ENCODE measurements at regions of chr1 and their contacts with region 1.

Region 1: GRCh38 chr1:196660852-196661251 is 9.0 kb downstream of the CFH start:
- DNase-seq: peak; percentile 47 to 49 (median 48)
- ATAC-seq: peak; percentile 82
- H3K4me3 ChIP-seq: no peak overlapping the region
- H3K27ac ChIP-seq: no peak overlapping the region
- H3K4me1 ChIP-seq: no peaks in the 10 kb centered on the region
- H3K27me3 ChIP-seq: no peaks in the 10 kb centered on the region
- CTCF ChIP-seq: peak in 2 of 3 experiments; percentile 52 to 69; a peak in 3 of 6 replicates
- EP300 ChIP-seq: no peak
- POLR2A ChIP-seq: no peak
- RAD21 ChIP-seq: peak; percentile 92 to 93

Region 2: DNA sequence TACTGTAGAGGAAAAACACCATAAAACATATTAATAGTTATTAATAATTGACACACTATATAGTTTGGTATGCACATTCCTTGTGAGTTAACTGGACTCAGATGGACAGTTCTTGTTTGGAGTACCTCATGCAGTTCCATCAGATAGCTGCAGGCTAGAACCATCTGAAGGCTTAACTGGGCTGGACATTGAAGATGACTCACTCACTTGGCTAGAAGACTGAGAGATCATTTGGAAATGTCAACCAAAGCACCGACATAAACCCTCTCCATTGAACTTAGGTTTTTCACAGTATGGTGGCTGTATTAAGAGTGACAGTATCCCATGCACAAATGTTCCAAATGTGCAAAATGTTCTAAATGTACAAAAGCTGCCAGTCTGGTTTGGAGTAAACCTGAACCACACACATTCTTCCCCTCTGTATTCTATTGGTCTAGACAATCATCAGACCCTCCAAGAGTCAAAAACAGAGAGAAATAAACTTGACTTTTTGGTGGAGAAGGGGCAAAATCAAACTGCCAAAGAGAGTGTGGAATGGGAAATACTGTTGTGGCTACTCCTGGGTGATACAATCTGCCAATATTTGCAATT is 761.0 kb before region 1 on chr1:
- CTCF ChIA-PET with region 1: no interaction called
- POLR2A ChIA-PET with region 1: no interaction called
- in situ Hi-C with region 1: loop called (anchors 25 kb)
- intact Hi-C with region 1: loop called (anchors 2 kb)
- DNase-seq: peak; percentile 49 to 90 (median 62)
- ATAC-seq: peak; percentile 90
- H3K4me3 ChIP-seq: no peak overlapping the region
- H3K27ac ChIP-seq: peak overlapping the region; percentile 65
- H3K4me1 ChIP-seq: peaks cover 0 to 30% of the 10 kb centered on the region in 2 experiments; a peak in 2 of 5 replicates
- H3K27me3 ChIP-seq: no peaks in the 10 kb centered on the region
- CTCF ChIP-seq: no peak
- EP300 ChIP-seq: peak; percentile 80
- POLR2A ChIP-seq: no peak
- RAD21 ChIP-seq: no peak; a peak in 1 of 4 replicates

Region 3: GRCh38 chr1:196317535-196318522 is 343.0 kb before region 1 on chr1:
- CTCF ChIA-PET with region 1: interaction called, 12 read pairs
- POLR2A ChIA-PET with region 1: no interaction called
- in situ Hi-C with region 1: loop called (anchors 10 kb)
- intact Hi-C with region 1: loop called (anchors 1 kb)
- DNase-seq: peak in 3 of 4 experiments; percentile 10 to 47 (median 13)
- ATAC-seq: peak; percentile 64; the same call in 2 of the 3 replicates
- H3K4me3 ChIP-seq: no peak overlapping the region
- H3K27ac ChIP-seq: no peak overlapping the region
- H3K4me1 ChIP-seq: no peaks in the 10 kb centered on the region
- H3K27me3 ChIP-seq: no peaks in the 10 kb centered on the region
- CTCF ChIP-seq: peak; percentile 41 to 54 (median 46); a peak in 4 of 6 replicates
- EP300 ChIP-seq: no peak
- POLR2A ChIP-seq: no peak
- RAD21 ChIP-seq: peak; percentile 70 to 78

Region 4: DNA sequence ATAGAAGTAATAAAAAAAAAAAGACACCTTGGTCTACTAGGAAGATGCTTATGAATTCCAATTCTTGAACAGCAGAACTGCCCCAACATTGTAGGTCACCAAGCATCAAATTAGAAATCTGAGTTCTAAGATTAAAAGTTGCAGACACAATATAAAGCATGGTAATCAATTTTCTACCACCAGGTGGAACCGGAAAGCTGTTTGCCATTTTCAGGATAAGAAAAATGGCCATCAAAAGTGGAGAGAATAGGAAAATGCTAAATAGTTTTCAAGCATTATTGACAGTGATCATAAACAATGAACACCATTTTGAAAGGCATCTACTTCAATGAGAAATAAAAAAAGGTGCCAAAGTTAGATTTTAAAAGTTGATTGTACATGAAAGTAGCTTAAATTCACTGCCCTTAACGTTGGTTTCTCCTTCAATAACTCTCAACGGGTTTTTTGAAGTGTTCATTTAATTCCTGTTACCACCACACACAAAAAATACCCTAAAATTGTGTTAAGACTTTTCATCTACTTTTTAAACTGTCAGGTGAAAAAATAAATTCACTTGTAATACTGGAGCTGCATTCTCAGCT is 305.6 kb before region 1 on chr1:
- CTCF ChIA-PET with region 1: interaction called, 4 read pairs
- POLR2A ChIA-PET with region 1: no interaction called
- in situ Hi-C with region 1: no loop called
- intact Hi-C with region 1: loop called (anchors 1 kb)
- DNase-seq: peak in 1 of 4 experiments; percentile 11
- ATAC-seq: no peak
- H3K4me3 ChIP-seq: no peak overlapping the region
- H3K27ac ChIP-seq: no peak overlapping the region
- H3K4me1 ChIP-seq: no peaks in the 10 kb centered on the region
- H3K27me3 ChIP-seq: no peaks in the 10 kb centered on the region
- CTCF ChIP-seq: peak; percentile 17 to 37 (median 18); a peak in 3 of 6 replicates
- EP300 ChIP-seq: no peak
- POLR2A ChIP-seq: no peak
- RAD21 ChIP-seq: peak; percentile 48 to 71; a peak in 3 of 4 replicates

Region 5: GRCh38 chr1:196477262-196477661 is 183.6 kb before region 1 on chr1:
- CTCF ChIA-PET with region 1: no interaction called
- POLR2A ChIA-PET with region 1: no interaction called
- in situ Hi-C with region 1: no loop called
- intact Hi-C with region 1: loop called (anchors 5 kb)
- DNase-seq: no peak
- ATAC-seq: peak; percentile 65
- H3K4me3 ChIP-seq: no peak overlapping the region
- H3K27ac ChIP-seq: no peak overlapping the region
- H3K4me1 ChIP-seq: no peaks in the 10 kb centered on the region
- H3K27me3 ChIP-seq: no peaks in the 10 kb centered on the region
- CTCF ChIP-seq: peak in 2 of 3 experiments; percentile 9 to 13; a peak in 1 of 6 replicates
- EP300 ChIP-seq: no peak
- POLR2A ChIP-seq: no peak
- RAD21 ChIP-seq: peak in 1 of 2 experiments; percentile 50; a peak in 2 of 4 replicates

Measured in K562 (cell line).